CD8-positive, alpha-beta T cell (primary cell): ENCODE measurements at regions of chr7 and their contacts with region 1.

Region 1: DNA sequence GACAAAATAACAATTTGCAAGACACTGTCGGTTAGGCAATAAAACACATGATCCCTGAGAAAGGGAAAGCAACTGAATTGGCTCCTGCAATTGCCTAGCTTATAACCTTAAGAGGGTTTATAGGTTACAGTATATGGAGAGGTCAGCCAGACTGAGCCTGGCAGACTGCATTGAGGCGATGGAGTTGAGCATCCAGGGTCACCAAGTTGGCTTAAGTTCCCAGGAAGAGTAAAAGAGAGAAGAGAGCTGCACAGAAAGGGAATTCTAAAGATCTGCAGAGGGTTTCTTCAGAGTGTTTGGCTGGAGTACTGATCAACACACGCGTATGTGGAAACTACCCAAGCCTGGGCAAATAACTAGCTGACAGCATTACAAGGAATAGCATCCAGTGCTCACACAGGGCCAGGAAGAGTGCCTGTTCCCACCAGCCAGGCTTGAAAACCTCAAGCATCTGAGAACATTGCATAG is 11.2 kb downstream of the ANKMY2 start:
- DNase-seq: no peak
- ATAC-seq: no peak
- H3K4me3 ChIP-seq: no peak overlapping the region
- H3K4me3 Mint-ChIP-seq: no peak overlapping the region
- H3K27ac ChIP-seq: no peak overlapping the region
- H3K27ac Mint-ChIP-seq: no peak overlapping the region
- H3K4me1 ChIP-seq: no peaks in the 10 kb centered on the region
- H3K4me1 Mint-ChIP-seq: peaks cover 2% of the 10 kb centered on the region
- H3K27me3 ChIP-seq: no peaks in the 10 kb centered on the region
- H3K27me3 Mint-ChIP-seq: no peaks in the 10 kb centered on the region
- CTCF ChIP-seq: no peak

Region 2: DNA sequence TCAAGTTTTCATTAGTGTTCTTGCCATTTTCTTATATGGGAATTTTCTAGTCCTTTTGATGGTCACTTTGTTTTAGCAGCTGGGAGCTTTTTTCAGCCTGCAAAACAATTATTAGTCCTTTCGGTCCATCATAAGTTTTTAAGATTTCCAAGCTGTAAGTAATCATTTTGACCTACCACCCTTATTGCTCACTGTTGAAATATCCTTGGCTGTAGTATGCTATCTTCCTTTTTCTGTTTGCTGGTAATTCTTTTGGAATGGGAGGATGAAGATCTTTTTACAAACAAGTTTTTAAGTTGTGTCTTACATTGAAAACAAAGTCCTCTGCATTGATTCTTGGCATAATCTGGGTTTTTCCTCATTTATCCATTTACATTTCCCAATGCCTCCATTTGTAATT is 35.7 kb after region 1 on chr7:
- CTCF ChIA-PET with region 1: no interaction called
- POLR2A ChIA-PET with region 1: no interaction called
- intact Hi-C with region 1: loop called in 1 of 2 experiments (anchors 5 kb)
- DNase-seq: no peak
- ATAC-seq: no peak
- H3K4me3 ChIP-seq: no peak overlapping the region
- H3K4me3 Mint-ChIP-seq: no peak overlapping the region
- H3K27ac ChIP-seq: no peak overlapping the region
- H3K27ac Mint-ChIP-seq: no peak overlapping the region
- H3K4me1 ChIP-seq: no peaks in the 10 kb centered on the region
- H3K4me1 Mint-ChIP-seq: peaks cover 9% of the 10 kb centered on the region
- H3K27me3 ChIP-seq: no peaks in the 10 kb centered on the region
- H3K27me3 Mint-ChIP-seq: no peaks in the 10 kb centered on the region
- CTCF ChIP-seq: no peak